ENCODE measurements at regions of chr3 and their contacts with region 1.

Region 1: DNA sequence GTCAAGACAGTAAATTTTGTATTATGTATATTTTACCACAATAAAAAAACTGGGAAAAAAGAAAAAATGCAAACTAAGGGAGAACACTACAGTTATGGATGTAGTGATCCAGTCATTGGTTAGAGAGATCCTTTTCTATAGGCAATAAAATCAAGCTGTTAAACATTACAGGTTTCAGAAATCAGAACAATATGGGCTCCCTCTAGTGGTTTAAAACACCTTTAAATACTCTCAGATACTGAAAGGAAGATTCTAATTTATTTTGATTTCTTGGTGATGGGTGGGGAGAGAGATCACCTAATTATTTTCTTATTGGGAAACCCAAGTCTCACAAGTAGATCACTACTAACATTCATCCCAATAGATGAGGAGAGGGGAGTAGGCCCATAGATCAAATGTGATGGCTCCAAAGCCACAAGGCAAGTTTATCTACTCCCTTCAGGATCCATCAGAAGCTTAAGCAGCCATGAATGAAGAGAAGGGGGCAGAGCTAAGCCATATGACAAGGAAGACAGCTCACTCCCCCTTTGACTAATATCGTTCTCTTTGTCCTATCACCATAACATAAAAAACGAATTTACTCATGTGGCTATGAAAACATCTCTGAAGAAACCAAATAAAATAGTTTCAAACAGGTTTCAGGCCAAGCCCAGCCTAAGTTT is 118.6 kb downstream of the ANO10 start:
- DNase-seq: no peak
- ATAC-seq: peak; percentile 65
- H3K4me3 Mint-ChIP-seq: no peak overlapping the region
- H3K27ac Mint-ChIP-seq: no peak overlapping the region
- H3K4me1 Mint-ChIP-seq: peaks cover 34% of the 10 kb centered on the region
- H3K27me3 Mint-ChIP-seq: no peaks in the 10 kb centered on the region

Region 2: GRCh38 chr3:43155464-43156121 is 347.6 kb before region 1 on chr3:
- CTCF ChIA-PET with region 1: interaction called, 63 read pairs
- POLR2A ChIA-PET with region 1: no interaction called
- DNase-seq: no peak
- ATAC-seq: no peak
- H3K4me3 Mint-ChIP-seq: no peak overlapping the region
- H3K27ac Mint-ChIP-seq: no peak overlapping the region
- H3K4me1 Mint-ChIP-seq: peaks cover 11% of the 10 kb centered on the region
- H3K27me3 Mint-ChIP-seq: peaks cover 3% of the 10 kb centered on the region

Region 3: DNA sequence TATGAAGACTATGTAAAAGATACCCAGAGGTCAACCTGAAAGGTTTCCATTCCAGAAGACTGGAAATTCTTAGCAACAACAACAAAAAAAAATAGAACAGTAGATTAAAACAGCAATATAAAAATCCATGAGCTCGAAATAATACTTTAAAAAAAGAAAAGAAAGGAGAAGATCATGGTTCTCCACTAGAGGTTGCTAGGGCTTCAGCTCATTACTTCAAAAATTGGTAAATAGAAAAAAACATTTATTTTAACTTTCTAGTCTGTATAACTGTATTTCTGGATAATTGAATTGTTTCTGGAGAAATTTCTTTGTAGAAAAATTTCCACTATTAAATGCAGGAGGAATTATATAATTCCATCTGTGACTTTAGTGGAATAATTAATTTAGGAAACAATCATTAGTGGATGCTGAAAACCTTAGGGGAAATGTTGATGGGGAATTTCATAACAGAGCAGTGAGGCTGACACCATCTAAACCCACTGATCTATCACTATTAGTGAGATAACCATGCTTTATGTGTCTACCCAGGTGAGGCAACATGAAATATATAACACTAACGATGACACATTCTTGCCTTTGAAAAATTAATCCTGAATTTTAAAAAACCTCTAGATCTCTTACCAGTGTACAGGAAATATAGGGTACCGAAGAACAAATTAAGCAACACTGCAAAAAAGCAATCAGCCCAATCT is 279.4 kb before region 1 on chr3:
- CTCF ChIA-PET with region 1: interaction called, 15 read pairs
- POLR2A ChIA-PET with region 1: no interaction called
- DNase-seq: no peak
- ATAC-seq: no peak
- H3K4me3 Mint-ChIP-seq: no peak overlapping the region
- H3K27ac Mint-ChIP-seq: no peak overlapping the region
- H3K4me1 Mint-ChIP-seq: peaks cover 33% of the 10 kb centered on the region
- H3K27me3 Mint-ChIP-seq: no peaks in the 10 kb centered on the region

Region 4: GRCh38 chr3:43345877-43346276 is 157.3 kb before region 1 on chr3:
- CTCF ChIA-PET with region 1: interaction called, 25 read pairs
- POLR2A ChIA-PET with region 1: no interaction called
- DNase-seq: peak; percentile 55
- ATAC-seq: peak; percentile 56
- H3K4me3 Mint-ChIP-seq: peak overlapping the region; percentile 43
- H3K27ac Mint-ChIP-seq: peak overlapping the region; percentile 97
- H3K4me1 Mint-ChIP-seq: peaks cover 77% of the 10 kb centered on the region
- H3K27me3 Mint-ChIP-seq: no peaks in the 10 kb centered on the region

Region 5: GRCh38 chr3:43378066-43378935 is 124.9 kb before region 1 on chr3:
- CTCF ChIA-PET with region 1: interaction called, 34 read pairs
- POLR2A ChIA-PET with region 1: no interaction called
- DNase-seq: peak; percentile 83
- ATAC-seq: peak; percentile 96
- H3K4me3 Mint-ChIP-seq: no peak overlapping the region
- H3K27ac Mint-ChIP-seq: peak overlapping the region; percentile 65
- H3K4me1 Mint-ChIP-seq: peaks cover 16% of the 10 kb centered on the region
- H3K27me3 Mint-ChIP-seq: no peaks in the 10 kb centered on the region

Region 6: GRCh38 chr3:43389388-43390254 is 113.6 kb before region 1 on chr3:
- CTCF ChIA-PET with region 1: interaction called, 20 read pairs
- POLR2A ChIA-PET with region 1: no interaction called
- DNase-seq: peak; percentile 87
- ATAC-seq: peak; percentile 91
- H3K4me3 Mint-ChIP-seq: peak overlapping the region; percentile 22
- H3K27ac Mint-ChIP-seq: peak overlapping the region; percentile 89
- H3K4me1 Mint-ChIP-seq: peaks cover 53% of the 10 kb centered on the region
- H3K27me3 Mint-ChIP-seq: no peaks in the 10 kb centered on the region

Measured in activated CD8-positive, alpha-beta T cell treated with anti-CD3 and anti-CD28 coated beads, Interleukin-2, amount 10 ng/mL, durations not matched to agents 7 days and 5 days (primary cell).